H1 (cell line): ENCODE measurements at regions of chr7 and their contacts with region 1.

Region 1: DNA sequence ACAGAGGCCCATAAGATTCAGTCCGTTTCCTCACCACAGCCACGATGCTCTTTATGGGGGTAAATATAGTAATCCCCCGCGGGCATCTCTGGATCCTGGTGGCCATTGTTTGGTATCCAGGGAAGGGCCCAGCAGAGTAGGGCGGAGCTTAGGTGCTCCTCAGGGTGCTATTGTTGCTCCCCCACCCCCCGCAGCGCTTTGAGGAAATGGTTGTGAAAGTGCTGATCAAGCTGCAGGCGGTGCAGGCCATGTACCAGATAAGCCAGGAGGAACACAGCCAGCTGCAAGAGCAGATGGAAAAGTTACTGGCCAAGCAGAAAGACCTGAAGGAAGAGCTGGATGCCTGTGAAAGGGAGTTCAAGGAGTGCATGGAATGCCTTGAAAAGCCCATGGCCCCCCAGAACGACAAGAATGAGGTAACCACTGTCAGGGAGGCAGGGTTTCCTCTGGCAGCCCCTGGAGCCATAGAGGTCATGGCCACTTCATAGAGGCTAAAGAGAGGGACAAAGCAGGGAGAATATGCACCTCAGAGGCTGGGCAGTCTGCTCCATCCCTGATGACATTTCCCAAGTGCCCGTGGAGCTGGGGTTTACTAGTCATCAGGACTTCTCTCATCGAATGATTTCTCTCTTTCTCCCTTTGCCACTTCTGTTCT is 17.6 kb upstream of the FLNC start:
- DNase-seq: no peak
- H3K4me3 ChIP-seq: no peak overlapping the region
- H3K27ac ChIP-seq: no peak overlapping the region
- H3K4me1 ChIP-seq: peaks cover 3 to 9% (median 4%) of the 10 kb centered on the region in 4 experiments; a peak in 6 of 7 replicates
- H3K27me3 ChIP-seq: no peaks in the 10 kb centered on the region
- CTCF ChIP-seq: no peak
- EP300 ChIP-seq: no peak
- POLR2A ChIP-seq: no peak
- RAD21 ChIP-seq: no peak

Region 2: DNA sequence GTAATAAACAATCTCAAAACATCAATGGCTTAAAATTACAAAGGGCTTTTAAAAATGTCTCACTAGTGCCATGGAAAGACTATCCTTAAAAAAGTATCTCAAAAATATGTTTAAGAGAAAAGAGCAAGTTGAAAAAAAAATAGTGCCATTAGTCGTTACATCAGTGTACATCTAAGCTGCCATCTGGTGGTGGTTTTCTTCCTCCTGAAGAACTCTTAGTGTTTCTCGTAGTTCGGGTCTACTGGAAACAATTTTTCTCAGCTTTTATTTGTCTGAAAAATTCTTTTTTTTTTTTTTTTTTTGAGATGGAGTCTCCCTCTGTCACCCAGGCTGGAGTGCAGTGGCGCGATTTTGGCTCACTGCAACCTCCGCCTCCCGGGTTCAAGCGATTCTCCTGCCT is 146.4 kb before region 1 on chr7:
- CTCF ChIA-PET with region 1: no interaction called
- POLR2A ChIA-PET with region 1: no interaction called
- DNase-seq: no peak
- H3K4me3 ChIP-seq: no peak overlapping the region
- H3K27ac ChIP-seq: no peak overlapping the region
- H3K4me1 ChIP-seq: no peaks in the 10 kb centered on the region
- H3K27me3 ChIP-seq: no peaks in the 10 kb centered on the region
- CTCF ChIP-seq: peak in 1 of 3 experiments; percentile 39; a peak in 2 of 4 replicates
- EP300 ChIP-seq: no peak
- POLR2A ChIP-seq: no peak
- RAD21 ChIP-seq: peak; percentile 18 to 29; a peak in 3 of 4 replicates

Region 3: DNA sequence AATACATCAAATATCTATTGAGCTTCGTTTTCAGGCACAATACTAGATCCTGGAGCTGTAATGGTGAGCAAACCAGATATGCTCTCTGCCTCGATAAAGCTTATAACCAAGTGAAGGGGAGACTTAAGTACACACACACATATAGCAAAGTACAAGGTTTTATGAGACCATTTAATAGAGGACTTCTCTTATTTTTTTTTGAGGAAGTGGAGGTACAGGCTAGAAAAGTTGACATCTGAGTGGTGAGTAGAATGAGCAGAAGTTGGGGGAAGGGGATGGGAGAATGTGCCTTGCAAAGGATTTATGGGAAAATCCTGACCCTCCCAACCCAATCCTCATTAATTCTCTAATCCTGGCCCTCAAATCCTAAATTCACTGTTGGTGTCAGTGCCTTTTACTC is 13.2 kb before region 1 on chr7:
- CTCF ChIA-PET with region 1: interaction called, 4 read pairs
- POLR2A ChIA-PET with region 1: interaction called, 12 read pairs
- DNase-seq: no peak
- H3K4me3 ChIP-seq: no peak overlapping the region
- H3K27ac ChIP-seq: no peak overlapping the region
- H3K4me1 ChIP-seq: no peaks in the 10 kb centered on the region
- H3K27me3 ChIP-seq: no peaks in the 10 kb centered on the region
- CTCF ChIP-seq: no peak
- EP300 ChIP-seq: no peak
- POLR2A ChIP-seq: no peak
- RAD21 ChIP-seq: no peak